B cell (primary cell): ENCODE measurements at regions of chr10 and their contacts with region 1.

Region 1: GRCh38 chr10:124025660-124026588 is 67.5 kb downstream of the CHST15 start:
- DNase-seq: peak; percentile 71
- ATAC-seq: peak; percentile 74
- H3K4me3 ChIP-seq: no peak overlapping the region
- H3K4me3 Mint-ChIP-seq: no peak overlapping the region
- H3K27ac ChIP-seq: no peak overlapping the region
- H3K27ac Mint-ChIP-seq: no peak overlapping the region
- H3K4me1 ChIP-seq: peaks cover 12 to 15% of the 10 kb centered on the region in 2 donors
- H3K4me1 Mint-ChIP-seq: peaks cover 14% of the 10 kb centered on the region
- H3K27me3 ChIP-seq: no peaks in the 10 kb centered on the region
- H3K27me3 Mint-ChIP-seq: no peaks in the 10 kb centered on the region
- CTCF ChIP-seq: peak; percentile 67

Region 2: DNA sequence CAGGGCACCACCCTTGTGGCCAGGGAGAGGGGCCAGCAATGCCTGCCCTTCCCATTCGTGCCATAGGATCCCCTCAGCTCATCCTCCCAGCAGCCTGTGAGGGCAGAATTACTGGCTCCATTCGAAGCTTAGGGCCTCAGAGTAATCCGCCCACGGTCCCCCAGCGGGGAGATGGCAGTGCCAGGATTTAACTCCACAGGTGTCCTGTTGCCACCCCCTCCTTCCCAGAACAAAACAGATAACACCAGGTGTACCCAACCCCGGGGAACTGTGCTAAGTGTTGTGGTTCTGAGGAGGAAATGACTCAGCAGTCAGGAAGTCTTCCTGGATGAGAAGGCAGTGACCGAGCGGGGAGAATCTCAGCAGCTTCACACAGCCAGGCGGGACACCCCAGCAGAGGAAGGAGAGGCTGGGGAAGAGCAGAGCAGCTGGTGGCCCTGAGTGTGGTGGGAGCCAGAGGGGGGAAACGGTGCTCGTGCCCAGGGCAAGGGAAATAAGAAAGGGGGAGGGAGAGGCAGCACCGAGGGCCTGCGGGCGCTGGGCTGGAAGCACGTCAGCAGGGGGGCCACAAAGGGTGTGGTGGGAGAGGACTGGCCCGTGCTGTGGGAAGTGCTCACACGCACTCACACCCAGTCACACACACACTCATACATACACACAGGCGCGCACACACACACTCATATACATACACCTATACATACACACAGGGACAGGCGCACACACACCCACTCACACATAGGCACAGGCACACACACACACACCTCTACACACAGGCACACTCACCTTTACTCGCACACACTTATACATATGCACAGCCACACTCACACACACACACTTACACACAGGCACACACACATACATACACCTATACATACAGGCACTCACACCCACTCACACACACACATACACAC is 127.2 kb after region 1 on chr10:
- CTCF ChIA-PET with region 1: interaction called, 8 read pairs
- POLR2A ChIA-PET with region 1: no interaction called
- intact Hi-C with region 1: loop called (anchors 2 kb)
- DNase-seq: peak; percentile 56
- ATAC-seq: peak; percentile 59
- H3K4me3 ChIP-seq: peak overlapping the region in 2 of 5 experiments; percentile 25 to 34
- H3K4me3 Mint-ChIP-seq: no peak overlapping the region
- H3K27ac ChIP-seq: no peak overlapping the region
- H3K27ac Mint-ChIP-seq: no peak overlapping the region
- H3K4me1 ChIP-seq: peaks cover 30 to 34% of the 10 kb centered on the region in 2 donors
- H3K4me1 Mint-ChIP-seq: peaks cover 15% of the 10 kb centered on the region
- H3K27me3 ChIP-seq: no peaks in the 10 kb centered on the region
- H3K27me3 Mint-ChIP-seq: no peaks in the 10 kb centered on the region
- CTCF ChIP-seq: no peak

Region 3: DNA sequence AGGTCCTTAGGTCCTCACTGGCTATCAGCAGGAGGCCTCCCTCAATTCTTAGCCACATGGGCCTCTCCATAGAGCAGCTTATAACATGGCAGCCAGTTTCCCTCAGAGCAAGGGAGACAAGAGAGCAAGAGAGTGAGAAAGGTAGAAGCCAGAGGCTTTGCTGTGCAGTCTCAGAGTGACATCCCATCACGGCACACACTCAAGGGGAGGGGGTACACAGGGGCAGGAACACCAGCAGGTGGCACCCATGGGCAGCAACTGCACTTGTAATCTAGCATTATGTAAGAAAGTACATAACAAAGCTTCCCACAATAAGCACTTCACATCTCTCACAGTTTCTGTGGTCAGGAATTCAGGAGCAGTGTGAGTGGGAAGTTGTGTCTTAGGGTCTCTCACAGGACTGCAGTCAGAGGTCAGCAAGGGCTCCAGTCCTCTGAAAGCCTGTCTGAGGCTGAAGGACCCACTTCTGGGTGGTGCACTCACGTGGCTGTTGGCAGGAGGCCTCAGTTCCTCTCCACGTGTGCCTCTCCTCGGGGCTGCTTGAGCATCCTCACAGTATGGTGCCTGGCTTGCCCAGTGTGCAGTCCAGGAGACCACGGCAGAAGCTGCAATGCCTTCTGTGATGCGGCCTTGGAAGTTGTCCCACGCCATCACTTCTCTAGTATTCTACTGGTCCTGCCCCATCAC is 233.4 kb after region 1 on chr10:
- CTCF ChIA-PET with region 1: interaction called, 5 read pairs
- POLR2A ChIA-PET with region 1: no interaction called
- intact Hi-C with region 1: loop called (anchors 1 kb)
- DNase-seq: no peak
- ATAC-seq: no peak
- H3K4me3 ChIP-seq: no peak overlapping the region
- H3K4me3 Mint-ChIP-seq: no peak overlapping the region
- H3K27ac ChIP-seq: no peak overlapping the region
- H3K27ac Mint-ChIP-seq: no peak overlapping the region
- H3K4me1 ChIP-seq: no peaks in the 10 kb centered on the region
- H3K4me1 Mint-ChIP-seq: no peaks in the 10 kb centered on the region
- H3K27me3 ChIP-seq: no peaks in the 10 kb centered on the region
- H3K27me3 Mint-ChIP-seq: no peaks in the 10 kb centered on the region
- CTCF ChIP-seq: no peak